Activated naive CD4-positive, alpha-beta T cell treated with anti-CD3 and anti-CD28 coated beads for 36 hours (primary cell): ENCODE measurements at regions of chr2 and their contacts with region 1.

Region 1: GRCh38 chr2:218568190-218569037 is at the starts of genes CNOT9 and USP37:
- DNase-seq: peak; percentile 100
- H3K4me3 Mint-ChIP-seq: peak within 1 kb of the TSS; percentile 91
- H3K27ac Mint-ChIP-seq: peak within 1 kb of the TSS; percentile 100
- H3K4me1 Mint-ChIP-seq: peaks cover 60% of the 10 kb centered on the region
- H3K27me3 Mint-ChIP-seq: no peaks in the 10 kb centered on the region
- total RNA-seq, gene CNOT9: 74.3 to 78.6 TPM
- total RNA-seq, gene USP37: 21.7 to 23.2 TPM

Region 2: DNA sequence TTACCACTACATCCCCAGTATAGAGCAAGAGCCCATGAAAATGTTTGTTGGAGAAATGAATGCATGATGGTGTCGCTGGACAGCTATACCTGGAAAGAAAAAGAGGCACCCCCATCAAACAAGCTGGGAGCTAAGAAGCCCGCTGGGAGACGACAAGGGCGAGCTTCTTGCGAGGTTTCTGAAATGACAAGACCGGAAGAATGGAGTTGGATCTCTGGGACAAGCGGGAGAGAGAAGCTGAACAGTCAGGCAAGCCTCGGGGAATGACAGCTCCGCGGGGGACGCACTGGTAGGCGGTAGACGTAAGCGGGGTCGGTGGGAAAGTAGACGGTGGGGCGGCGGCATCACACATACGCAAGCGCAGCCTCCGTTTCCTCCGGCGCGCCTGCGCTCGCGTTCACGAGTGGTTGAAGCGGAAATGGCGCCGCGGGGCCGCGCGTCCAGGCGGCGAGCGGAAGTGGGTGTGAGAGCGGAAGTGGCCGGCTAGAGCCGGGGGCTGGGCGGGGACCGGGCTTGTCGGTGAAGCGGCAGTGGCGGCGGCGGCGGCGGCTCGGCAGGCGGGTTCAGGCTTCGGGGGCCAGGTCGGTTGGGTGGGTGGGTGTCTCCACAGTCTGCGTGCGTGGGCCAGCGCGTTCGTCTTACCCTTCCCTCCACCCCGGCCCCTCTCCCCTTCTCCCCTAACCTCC is 351.6 kb before region 1 on chr2 and contains the start of gene ARPC2:
- CTCF ChIA-PET with region 1: no interaction called
- intact Hi-C with region 1: loop called (anchors 1 kb)
- DNase-seq: peak; percentile 95
- H3K4me3 Mint-ChIP-seq: peak within 1 kb of the TSS; percentile 78
- H3K27ac Mint-ChIP-seq: peak within 1 kb of the TSS; percentile 88
- H3K4me1 Mint-ChIP-seq: peaks cover 29% of the 10 kb centered on the region
- H3K27me3 Mint-ChIP-seq: no peaks in the 10 kb centered on the region
- total RNA-seq, gene ARPC2: 461 to 475 TPM

Region 3: GRCh38 chr2:218292048-218293014 is 276.1 kb before region 1 on chr2 and contains the start of gene TMBIM1:
- CTCF ChIA-PET with region 1: no interaction called
- intact Hi-C with region 1: loop called (anchors 1 kb)
- DNase-seq: peak; percentile 75
- H3K4me3 Mint-ChIP-seq: peak within 1 kb of the TSS; percentile 78
- H3K27ac Mint-ChIP-seq: peak within 1 kb of the TSS; percentile 94
- H3K4me1 Mint-ChIP-seq: peaks cover 46% of the 10 kb centered on the region
- H3K27me3 Mint-ChIP-seq: no peaks in the 10 kb centered on the region
- total RNA-seq, gene TMBIM1: 43.1 to 43.4 TPM

Region 4: DNA sequence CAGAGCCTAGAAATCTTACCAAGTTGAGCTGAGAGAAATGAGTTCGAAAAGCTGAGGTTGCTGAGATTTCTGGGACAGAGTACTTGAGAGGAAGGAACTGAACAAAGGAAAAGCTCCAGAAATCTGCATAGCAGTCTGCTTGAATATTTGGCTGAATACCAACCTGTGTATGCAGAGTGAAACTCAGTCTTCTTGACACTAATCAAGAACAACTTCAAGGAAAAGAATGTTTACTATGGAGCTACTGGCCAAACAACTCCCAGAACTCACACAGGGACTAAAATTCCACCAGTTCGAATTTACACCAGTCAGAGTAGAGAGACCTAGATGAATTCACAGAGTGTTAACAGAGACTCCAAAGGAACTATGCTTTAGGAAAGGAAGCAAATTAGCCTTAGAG is 66.7 kb before region 1 on chr2:
- CTCF ChIA-PET with region 1: no interaction called
- intact Hi-C with region 1: no loop called
- DNase-seq: no peak
- H3K4me3 Mint-ChIP-seq: no peak overlapping the region
- H3K27ac Mint-ChIP-seq: no peak overlapping the region
- H3K4me1 Mint-ChIP-seq: no peaks in the 10 kb centered on the region
- H3K27me3 Mint-ChIP-seq: no peaks in the 10 kb centered on the region

Region 5: DNA sequence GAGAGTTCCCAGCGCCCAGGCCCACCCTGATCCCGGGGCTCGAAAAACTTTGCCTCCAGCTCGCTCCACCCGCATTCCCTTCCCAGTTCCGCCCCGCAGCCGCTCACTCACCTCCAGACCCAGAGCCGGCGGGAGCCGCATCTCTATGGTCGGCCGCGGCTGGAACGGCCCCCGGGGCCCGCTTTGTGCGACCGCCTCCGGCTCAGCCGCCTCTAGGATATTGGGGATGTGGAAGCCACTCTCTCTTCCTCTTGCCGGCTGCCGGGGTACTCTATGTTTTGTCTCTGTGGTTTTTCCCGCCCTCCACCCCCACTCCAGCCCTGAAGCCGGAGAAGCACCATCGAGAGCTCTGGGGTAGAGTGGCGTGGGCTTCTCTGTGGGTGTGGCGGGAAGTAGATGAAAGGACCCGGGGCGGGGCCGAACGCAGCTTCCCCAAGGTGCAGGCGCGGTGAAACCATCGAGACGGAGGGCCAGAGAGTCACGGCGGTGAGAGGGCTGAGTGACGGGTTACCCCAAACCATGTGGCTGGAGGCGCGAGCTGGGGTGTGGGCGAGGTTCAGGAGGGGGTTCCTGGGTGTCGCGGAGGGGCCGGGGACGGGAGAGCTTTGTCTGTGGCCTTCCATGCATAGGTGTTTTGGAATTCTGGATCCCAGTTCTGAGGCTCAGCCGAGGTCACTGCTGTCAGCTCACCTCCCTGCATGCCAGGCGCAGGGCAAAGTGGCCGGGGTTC is 91.0 kb after region 1 on chr2 and contains the starts of genes BCS1L and ZNF142:
- CTCF ChIA-PET with region 1: interaction called, 6 read pairs
- intact Hi-C with region 1: loop called (anchors 1 kb)
- DNase-seq: peak; percentile 98
- H3K4me3 Mint-ChIP-seq: peak within 1 kb of the TSS; percentile 90
- H3K27ac Mint-ChIP-seq: peak within 1 kb of the TSS; percentile 81
- H3K4me1 Mint-ChIP-seq: peaks cover 40% of the 10 kb centered on the region
- H3K27me3 Mint-ChIP-seq: no peaks in the 10 kb centered on the region
- total RNA-seq, gene BCS1L: 61.3 to 63.6 TPM
- total RNA-seq, gene ZNF142: 28.0 to 28.4 TPM

Region 6: DNA sequence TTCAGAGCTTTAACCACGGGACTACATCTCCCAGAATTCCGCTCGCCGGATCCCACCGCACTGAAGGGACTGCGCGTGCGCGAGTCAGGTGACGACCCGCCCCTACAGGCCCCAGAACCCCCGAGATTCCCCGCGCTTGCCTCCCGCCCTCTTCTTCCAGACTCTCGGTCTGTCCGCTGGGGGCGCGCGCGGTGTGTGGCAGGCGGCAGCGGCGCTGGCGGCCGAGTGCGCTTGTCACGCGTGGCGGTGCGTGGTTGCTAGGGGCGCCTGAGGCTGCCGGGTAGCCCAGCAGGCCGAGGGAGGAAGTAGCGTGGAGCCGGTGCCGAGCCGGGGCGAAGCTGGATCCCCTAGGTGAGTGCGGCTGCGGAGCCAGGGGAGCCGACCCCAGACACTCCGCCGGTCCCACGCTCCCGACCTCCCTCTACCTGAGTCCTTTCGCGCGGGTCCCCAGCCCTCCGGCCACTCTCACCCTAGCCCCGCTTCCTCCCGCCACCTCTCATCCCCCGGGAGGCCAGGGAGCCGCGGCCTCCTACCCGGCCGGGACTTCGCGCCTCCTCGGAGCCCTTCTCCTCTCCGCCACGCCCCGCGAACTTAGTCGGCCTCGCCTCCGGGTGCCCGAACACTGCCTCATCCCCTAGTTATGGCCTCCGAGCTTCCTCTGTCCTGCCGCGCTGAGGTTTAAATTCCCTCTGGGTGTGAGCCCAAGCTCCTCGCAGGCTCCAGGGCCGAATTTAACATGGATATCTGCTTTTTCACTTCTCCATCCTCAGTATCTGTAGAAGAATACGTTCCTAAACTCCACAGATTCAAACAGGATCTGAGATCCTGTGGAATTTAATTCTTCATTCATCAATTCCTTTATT is 142.5 kb after region 1 on chr2 and contains the start of gene TTLL4:
- CTCF ChIA-PET with region 1: no interaction called
- intact Hi-C with region 1: loop called (anchors 1 kb)
- DNase-seq: peak; percentile 99
- H3K4me3 Mint-ChIP-seq: peak within 1 kb of the TSS; percentile 98
- H3K27ac Mint-ChIP-seq: peak within 1 kb of the TSS; percentile 80
- H3K4me1 Mint-ChIP-seq: peaks cover 15% of the 10 kb centered on the region
- H3K27me3 Mint-ChIP-seq: peaks cover 3% of the 10 kb centered on the region
- total RNA-seq, gene TTLL4: 23.7 to 24.7 TPM

Region 7: DNA sequence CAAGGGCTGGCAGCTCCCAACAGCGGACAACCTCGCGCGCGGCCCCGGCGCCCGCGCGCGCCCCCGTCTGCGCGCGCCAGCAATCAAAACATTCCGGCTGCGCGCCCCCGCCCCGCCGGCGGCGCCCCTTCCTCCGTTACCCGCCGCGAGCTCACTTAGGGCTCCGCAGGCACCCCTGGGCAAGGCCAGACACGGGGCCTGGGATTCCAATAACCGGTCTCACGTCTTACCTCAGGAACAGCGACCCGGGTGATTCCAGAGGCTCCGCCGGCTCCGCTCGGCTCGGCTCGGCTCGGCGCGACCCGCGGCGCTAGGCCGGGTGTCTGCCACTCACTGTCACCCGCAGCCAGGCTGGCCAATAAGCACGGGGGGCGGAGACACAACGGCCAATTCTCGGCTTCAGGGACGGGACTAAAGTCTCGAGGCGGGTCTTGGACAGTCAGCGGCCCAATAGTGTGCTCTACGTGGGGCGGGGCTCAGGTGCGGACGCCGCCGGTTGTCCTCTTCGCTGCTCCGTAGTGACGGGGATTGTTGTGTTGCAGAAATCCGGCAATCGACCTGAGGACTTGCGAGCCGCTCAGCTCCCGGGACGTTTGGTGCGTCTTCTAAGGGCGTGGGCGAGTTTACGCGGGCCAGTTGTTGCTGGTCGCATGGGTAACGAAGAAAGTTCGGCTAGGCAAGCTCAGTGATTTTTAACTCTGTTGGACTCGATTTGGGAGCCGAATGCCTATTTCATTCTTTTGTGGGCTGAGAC is 661.1 kb after region 1 on chr2 and contains the starts of genes ANKZF1 and ATG9A:
- CTCF ChIA-PET with region 1: no interaction called
- intact Hi-C with region 1: loop called (anchors 1 kb)
- DNase-seq: peak; percentile 99
- H3K4me3 Mint-ChIP-seq: peak within 1 kb of the TSS; percentile 96
- H3K27ac Mint-ChIP-seq: peak within 1 kb of the TSS; percentile 97
- H3K4me1 Mint-ChIP-seq: peaks cover 48% of the 10 kb centered on the region
- H3K27me3 Mint-ChIP-seq: no peaks in the 10 kb centered on the region
- total RNA-seq, gene ANKZF1: 87.7 to 88.5 TPM
- total RNA-seq, gene ATG9A: 26.0 to 27.7 TPM